Common myeloid progenitor, CD34-positive (primary cell): ENCODE measurements at regions of chr2 and their contacts with region 1.

Region 1: GRCh38 chr2:60998628-60999545 is 18.6 kb upstream of the PEX13 start:
- DNase-seq: peak; percentile 56 to 73 (median 69)
- H3K4me3 ChIP-seq: no peak overlapping the region
- H3K27ac ChIP-seq: no peak overlapping the region
- H3K4me1 ChIP-seq: no peaks in the 10 kb centered on the region
- H3K27me3 ChIP-seq: no peaks in the 10 kb centered on the region

Region 2: DNA sequence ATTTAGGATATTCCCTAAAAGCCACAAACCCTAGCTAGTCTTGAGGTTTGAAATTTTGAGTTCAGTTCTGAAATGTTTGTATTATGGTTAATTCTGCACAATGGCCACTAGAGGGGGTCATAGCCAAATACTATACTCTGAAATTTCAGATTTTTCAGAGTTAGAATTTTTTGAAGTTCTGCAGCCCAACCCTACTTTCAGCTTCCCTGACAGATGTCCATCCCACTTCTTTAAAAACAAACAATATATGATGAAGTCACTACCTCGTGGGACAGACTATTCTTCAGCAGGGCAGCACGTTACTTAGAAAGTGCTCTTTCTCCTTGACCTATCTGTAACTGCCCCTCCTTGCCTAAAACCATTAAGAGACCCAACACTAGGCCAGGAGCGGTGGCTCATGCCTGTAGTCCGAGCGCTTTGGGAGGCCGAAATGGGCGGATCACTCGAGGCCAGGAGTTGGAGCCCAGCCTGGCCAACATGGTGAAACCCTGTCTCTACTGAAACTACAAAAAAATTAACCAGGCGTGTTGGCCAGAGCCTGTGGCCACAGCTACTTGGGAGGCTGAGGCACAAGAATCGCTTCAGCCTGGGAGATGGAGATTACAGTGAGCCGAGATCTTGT is 291.0 kb before region 1 on chr2:
- CTCF ChIA-PET with region 1: interaction called, 41 read pairs
- POLR2A ChIA-PET with region 1: no interaction called
- DNase-seq: peak; percentile 26 to 62 (median 54)
- H3K4me3 ChIP-seq: no peak overlapping the region
- H3K27ac ChIP-seq: no peak overlapping the region
- H3K4me1 ChIP-seq: peaks cover 0 to 8% (median 0%) of the 10 kb centered on the region in 4 experiments
- H3K27me3 ChIP-seq: no peaks in the 10 kb centered on the region

Region 3: DNA sequence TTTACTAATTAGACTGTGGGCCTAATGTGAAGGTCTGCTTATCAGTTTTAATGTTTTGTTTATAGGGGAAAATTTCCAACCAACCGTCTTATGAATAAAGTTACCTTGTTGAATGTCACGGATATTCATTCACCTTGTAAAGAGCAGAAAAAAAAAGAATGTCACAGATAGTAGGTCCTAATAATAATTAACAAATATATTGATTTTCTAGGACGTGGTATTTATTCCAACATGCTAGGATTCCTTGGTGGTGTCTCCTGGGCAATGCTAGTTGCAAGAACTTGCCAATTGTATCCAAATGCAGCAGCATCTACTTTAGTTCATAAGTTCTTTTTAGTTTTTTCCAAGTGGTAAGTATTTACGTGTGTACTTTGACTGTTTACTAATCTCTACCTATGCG is 219.5 kb before region 1 on chr2:
- CTCF ChIA-PET with region 1: interaction called, 11 read pairs
- POLR2A ChIA-PET with region 1: no interaction called
- DNase-seq: no peak
- H3K4me3 ChIP-seq: no peak overlapping the region
- H3K27ac ChIP-seq: peak overlapping the region in 1 of 2 experiments; percentile 32
- H3K4me1 ChIP-seq: no peaks in the 10 kb centered on the region
- H3K27me3 ChIP-seq: no peaks in the 10 kb centered on the region

Region 4: DNA sequence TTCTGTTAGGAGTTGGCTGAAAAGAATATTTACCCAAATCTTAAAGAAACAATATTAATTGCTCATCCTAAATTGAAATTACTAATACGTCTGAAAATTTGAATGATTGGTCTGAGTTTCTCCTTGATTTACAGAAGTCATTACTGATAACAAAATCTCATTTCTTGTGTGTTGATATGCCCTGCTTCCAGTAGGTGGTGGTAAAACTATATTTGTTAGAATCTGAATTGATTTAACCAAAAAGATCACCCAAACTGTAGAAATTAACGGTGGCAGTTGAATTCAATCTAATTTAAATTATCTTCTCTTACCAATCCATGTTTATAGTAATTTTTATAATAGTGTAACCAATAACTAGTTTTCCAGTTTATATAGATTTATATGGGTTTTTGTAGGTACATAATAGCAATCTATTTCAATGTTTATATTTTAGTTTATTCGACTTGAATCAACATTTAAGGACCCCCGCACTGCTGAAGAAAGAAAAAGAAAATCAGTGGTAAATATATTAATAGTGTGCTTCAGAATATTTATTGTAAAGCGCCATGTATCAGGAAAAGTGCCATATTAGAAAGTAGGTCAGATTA is 204.5 kb before region 1 on chr2:
- CTCF ChIA-PET with region 1: interaction called, 20 read pairs
- POLR2A ChIA-PET with region 1: no interaction called
- DNase-seq: peak; percentile 46 to 74 (median 69)
- H3K4me3 ChIP-seq: no peak overlapping the region
- H3K27ac ChIP-seq: peak overlapping the region in 1 of 2 experiments; percentile 9
- H3K4me1 ChIP-seq: peaks cover 12 to 31% (median 16%) of the 10 kb centered on the region in 4 experiments
- H3K27me3 ChIP-seq: no peaks in the 10 kb centered on the region

Region 5: DNA sequence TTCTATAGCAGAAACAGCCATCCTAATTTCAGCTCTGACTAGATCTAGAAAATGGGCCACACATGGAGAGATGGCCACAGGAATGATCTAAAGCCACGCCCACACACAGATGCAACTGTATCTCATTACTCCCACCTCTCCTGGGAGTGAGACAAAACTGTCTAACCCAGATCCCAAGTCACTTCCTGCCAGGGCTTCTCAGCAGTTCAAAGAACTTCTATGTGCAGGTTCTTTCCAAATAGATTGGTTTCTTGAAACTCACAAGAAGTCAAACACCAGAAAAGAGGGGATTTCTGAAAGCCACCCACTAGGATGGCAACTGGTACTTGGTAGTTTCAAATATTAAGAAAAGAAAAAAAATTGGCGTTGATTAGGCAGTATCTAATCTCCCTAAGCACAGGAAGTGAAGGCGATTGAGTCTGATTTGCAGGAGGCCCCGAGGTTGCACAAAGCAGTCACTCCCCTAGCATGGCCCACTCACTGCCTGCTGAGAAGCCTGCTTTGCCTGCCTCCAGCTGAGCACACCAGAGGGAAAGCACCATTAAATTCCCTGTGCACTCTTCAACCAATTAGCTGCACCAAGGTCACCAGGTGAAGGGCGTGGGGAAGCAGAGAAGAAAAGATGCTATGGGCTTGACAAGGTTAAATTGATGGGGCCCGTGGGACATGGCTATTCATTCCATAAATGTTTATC is 191.8 kb before region 1 on chr2:
- CTCF ChIA-PET with region 1: interaction called, 20 read pairs
- POLR2A ChIA-PET with region 1: no interaction called
- DNase-seq: peak in 2 of 3 donors; percentile 14 to 15
- H3K4me3 ChIP-seq: no peak overlapping the region
- H3K27ac ChIP-seq: peak overlapping the region in 1 of 2 experiments; percentile 41
- H3K4me1 ChIP-seq: peaks cover 5 to 16% (median 10%) of the 10 kb centered on the region in 4 experiments
- H3K27me3 ChIP-seq: no peaks in the 10 kb centered on the region

Region 6: DNA sequence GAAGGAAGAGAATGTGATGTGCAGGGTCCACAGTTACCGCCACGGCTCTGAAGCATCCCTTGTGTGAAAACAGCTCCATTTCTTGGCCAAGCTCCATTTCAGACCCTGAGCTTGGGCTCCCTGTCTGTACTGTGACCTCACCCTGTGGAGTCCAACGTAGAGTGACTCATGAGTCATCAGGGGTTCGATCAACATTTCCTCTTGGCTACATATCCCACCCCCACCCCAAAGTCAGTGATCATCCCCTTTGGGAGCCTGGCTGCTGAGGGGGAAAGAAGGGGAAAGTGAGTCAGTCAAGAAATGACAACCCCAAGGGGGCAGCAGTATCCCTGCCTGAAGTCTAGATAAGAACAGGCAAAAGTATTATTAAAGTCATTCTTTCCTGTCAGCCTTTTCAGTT is 180.6 kb before region 1 on chr2:
- CTCF ChIA-PET with region 1: interaction called, 11 read pairs
- POLR2A ChIA-PET with region 1: no interaction called
- DNase-seq: peak; percentile 15 to 27 (median 24)
- H3K4me3 ChIP-seq: no peak overlapping the region
- H3K27ac ChIP-seq: no peak overlapping the region
- H3K4me1 ChIP-seq: peaks cover 0 to 9% (median 0%) of the 10 kb centered on the region in 4 experiments
- H3K27me3 ChIP-seq: no peaks in the 10 kb centered on the region

Region 7: DNA sequence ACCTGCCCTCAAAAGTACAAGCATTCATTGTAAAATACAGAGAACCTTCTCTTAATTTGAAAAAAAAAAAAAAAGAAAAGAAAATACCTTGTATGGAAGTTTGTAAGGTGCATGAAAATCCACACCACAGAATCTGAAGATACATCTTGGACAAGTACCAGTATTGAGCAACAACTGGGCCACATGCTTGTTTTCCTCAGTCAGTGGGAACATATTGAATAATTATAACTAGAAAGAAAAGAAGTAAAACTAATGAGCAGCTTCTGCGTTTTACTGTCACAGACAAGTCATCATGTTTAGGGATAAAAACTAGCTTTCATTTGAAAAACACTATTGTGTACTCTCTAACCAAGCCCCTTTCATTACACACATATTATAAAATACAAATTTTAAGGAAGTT is 12.8 kb after region 1 on chr2:
- CTCF ChIA-PET with region 1: interaction called, 10 read pairs
- POLR2A ChIA-PET with region 1: no interaction called
- DNase-seq: no peak
- H3K4me3 ChIP-seq: no peak overlapping the region
- H3K27ac ChIP-seq: no peak overlapping the region
- H3K4me1 ChIP-seq: peaks cover 7 to 17% (median 9%) of the 10 kb centered on the region in 4 experiments
- H3K27me3 ChIP-seq: no peaks in the 10 kb centered on the region

Region 8: DNA sequence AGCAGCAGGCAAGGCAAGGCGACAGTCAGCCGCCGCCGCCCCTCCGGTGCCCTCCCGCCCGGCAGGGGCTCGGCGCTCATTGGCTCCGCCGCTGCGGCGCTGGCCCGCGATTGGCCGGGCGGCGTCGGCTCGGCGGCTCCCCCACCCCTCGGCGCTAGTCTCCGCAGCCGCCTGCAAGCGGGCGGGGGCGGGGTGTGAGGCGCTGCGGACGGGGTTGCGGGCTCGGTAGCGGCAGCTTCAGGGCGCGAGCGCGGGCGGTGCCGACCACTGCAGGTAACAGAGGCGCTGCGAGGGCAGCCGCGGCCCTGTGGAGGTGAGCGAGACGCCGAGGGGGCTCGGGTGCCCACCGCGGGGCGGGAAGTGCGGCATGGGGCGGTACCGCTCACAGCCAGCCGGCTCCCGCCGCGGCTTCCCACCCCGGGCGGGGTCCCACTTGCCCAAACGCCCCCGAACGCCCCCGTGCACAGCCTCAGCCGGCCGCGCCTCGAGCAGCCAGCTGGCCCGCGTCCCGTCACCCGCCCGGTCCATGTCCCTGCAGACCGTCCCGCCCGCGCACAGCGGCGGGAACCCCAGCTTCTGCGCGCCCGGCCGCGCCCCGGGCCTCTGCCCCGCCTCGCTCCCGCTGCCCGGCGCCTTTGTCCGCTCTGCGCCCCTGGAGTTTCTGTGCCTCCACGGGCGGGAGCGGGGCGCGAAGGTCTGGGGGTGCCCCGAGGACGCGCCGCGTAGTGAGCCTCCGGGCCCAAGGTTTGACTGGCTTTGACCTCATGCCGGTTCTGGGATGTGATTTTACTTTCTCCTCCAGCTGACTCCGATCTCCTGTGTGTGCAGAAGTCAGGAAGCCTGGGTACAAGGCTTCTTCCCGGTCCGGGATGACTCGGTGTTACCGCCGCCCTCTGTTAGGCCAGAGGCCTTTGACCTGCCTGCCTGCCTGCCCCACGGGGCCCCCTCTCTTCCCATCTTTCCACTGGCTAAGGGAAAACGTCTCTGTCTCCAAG is 67.1 kb after region 1 on chr2 and contains the start of gene SANBR:
- CTCF ChIA-PET with region 1: no interaction called
- POLR2A ChIA-PET with region 1: no interaction called
- DNase-seq: peak; percentile 84 to 94 (median 91)
- H3K4me3 ChIP-seq: peak within 1 kb of the TSS; percentile 76 to 93 (median 87)
- H3K27ac ChIP-seq: peak within 1 kb of the TSS in 1 of 2 experiments; percentile 49
- H3K4me1 ChIP-seq: peaks cover 5 to 14% (median 12%) of the 10 kb centered on the region in 4 experiments
- H3K27me3 ChIP-seq: no peaks in the 10 kb centered on the region